ENCODE measurements at regions of chrX and their contacts with region 1.

Region 1: DNA sequence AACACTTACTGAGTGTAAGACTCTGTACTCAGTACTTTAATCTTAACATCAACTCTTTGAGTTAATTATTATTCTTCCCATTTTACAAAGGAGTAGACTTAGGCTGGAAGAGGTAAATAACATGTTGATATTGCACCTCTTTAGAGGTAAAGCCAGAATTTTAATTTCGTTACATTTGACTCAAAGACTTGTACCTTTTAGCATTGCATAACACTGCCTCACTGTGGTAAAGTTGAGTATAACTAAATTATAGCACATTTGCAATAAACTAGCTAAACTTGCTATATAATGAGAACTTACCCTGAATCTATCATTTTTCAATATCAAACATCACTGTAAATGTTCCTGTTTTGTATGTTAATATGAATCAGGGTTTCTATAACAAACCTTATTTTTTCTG is 218.5 kb downstream of the PRR32 start:
- DNase-seq: no peak
- ATAC-seq: no peak
- H3K4me3 ChIP-seq: no peak overlapping the region
- H3K27ac ChIP-seq: no peak overlapping the region
- H3K4me1 ChIP-seq: no peaks in the 10 kb centered on the region
- H3K27me3 ChIP-seq: no peaks in the 10 kb centered on the region
- CTCF ChIP-seq: peak in 7 of 9 donors; percentile 22 to 45 (median 27)

Region 2: DNA sequence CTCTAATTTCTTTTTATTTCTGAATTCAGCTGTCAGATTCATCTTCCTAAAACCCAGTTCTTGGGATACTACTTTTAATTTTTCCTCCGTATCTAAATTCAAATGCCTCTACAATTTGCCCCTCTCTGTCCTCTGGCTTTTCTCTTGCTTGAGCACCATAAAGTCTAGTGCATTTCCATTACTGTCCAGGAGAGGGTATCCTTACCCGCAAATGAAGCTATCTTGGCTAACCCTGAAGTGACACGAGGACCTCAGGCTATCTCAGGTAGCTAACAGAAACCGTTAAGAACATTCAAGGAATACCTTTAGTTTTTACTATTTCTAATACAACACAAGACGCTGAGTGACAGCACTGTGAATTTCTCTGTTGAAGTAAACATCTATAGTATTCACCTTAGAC is 267.9 kb before region 1 on chrX:
- intact Hi-C with region 1: loop called in 6 of 10 experiments (anchors 2 to 10 kb)
- DNase-seq: no peak
- ATAC-seq: peak in 1 of 8 donors; percentile 63
- H3K4me3 ChIP-seq: no peak overlapping the region
- H3K27ac ChIP-seq: no peak overlapping the region
- H3K4me1 ChIP-seq: no peaks in the 10 kb centered on the region
- H3K27me3 ChIP-seq: no peaks in the 10 kb centered on the region
- CTCF ChIP-seq: peak; percentile 13 to 57 (median 50)

Region 3: DNA sequence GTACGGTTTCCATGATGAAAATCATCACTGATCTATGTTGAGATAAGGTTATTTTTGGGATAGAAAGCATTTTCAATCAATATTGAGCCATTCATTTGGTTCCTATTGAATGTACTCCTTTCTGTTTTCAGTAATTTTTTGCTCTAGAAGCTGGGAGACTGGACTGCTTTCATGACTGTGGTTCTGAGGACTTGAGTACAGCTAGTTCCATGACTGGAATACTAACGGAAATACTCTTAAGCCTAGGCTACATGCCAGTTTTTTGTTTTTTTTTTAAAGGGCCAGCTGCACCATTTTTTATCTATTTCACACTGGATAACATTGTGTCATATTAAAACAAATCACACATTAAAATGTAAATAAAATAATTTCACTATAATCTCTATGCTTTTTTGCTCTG is 201.9 kb before region 1 on chrX:
- intact Hi-C with region 1: loop called in 1 of 10 experiments (anchors 5 kb)
- DNase-seq: no peak
- ATAC-seq: peak in 2 of 8 donors; percentile 35 to 72
- H3K4me3 ChIP-seq: no peak overlapping the region
- H3K27ac ChIP-seq: no peak overlapping the region
- H3K4me1 ChIP-seq: no peaks in the 10 kb centered on the region
- H3K27me3 ChIP-seq: no peaks in the 10 kb centered on the region
- CTCF ChIP-seq: no peak